Activated CD4-positive, alpha-beta T cell treated with anti-CD3 and anti-CD28 coated beads, Interleukin-2, amount 10 ng/mL, durations not matched to agents 24 days and 14 days (primary cell): ENCODE measurements at regions of chr16 and their contacts with region 1.

Region 1: DNA sequence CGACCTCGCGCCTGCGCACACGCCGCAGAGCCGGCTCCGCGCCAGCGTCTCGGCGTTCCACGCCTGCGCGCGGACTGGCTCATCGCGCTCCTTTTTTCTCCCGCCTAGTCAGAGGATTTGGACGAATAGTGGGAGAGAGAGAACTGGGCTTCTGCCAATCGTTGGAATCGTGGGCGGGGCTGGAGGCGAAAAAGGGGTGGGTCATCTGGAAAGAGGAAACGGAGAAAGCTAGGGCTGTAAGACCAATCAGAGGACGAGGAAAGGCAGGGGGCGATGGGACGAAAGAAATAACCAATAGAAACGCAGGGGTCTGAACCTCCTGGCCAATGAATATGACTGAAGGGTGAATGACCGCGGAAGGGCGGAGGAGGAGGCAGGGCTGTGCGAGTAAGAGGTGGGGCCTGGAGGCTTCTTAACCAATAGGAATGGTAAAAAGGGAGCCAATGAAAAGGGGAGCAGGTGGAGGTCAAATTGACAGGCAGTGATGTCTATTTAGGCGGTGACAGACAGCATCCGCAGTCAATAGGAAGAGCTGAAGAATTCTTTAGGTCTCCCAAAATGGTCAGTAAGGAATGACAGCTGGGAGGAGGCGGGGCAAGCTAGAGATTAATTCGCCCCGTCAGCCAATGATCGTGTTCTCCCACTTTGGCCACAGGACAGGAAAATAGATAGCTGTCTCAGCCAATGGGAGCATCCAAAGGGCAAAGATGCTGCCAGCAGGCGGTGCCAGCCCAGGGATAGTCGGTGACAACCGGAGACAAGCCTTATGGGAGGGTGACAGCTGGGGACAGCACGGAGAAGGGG is at the start of gene TBC1D10B:
- DNase-seq: peak; percentile 100
- H3K4me3 Mint-ChIP-seq: peak within 1 kb of the TSS; percentile 90
- H3K27ac Mint-ChIP-seq: peak within 1 kb of the TSS; percentile 94
- H3K4me1 Mint-ChIP-seq: peaks cover 42% of the 10 kb centered on the region
- H3K27me3 Mint-ChIP-seq: peaks cover 4% of the 10 kb centered on the region
- total RNA-seq, gene TBC1D10B: 68.9 TPM in 2 replicates

Region 2: DNA sequence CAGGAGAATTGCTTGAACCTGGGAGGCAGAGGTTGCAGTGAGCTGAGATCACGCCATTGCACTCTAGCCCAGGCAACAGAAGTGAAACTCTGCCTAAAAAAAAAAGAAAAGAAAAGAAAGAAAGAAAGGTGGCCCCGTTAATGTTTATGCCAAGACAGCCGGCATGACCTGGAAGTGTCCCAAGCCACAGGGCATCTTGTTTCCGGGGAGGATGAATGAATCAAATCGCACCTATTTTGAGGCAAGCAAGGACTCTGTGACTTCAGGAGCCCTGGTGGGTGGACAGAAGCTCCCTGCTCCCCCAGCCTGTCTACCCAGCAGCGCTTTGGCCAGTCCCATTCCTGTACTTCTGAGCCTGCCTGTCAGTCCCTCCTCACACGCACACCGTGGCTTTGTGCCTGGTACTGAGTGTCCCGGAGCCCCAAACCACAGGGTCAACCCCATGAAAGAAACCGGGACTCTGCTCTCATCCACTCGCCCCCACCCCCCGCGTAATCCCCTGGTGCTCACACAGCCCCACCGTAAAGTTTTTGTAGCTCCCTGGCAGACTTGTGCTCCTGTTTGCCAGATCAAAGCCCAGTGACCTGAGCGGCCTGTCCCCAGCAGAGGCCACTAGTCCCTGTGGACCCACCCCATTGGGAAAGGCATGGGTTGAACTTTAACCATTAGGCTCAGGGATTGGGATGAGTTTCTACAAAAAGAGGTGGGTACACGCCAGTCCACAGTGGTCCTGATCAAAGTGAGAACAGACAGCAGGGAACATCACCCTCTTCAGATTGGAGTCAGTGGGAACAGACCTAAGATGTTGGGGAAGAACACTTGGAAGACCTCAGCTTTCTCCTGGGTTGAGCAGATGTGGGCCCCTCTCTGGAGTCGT is 34.8 kb before region 1 on chr16:
- intact Hi-C with region 1: loop called (anchors 1 kb)
- DNase-seq: no peak
- H3K4me3 Mint-ChIP-seq: peak overlapping the region; percentile 86
- H3K27ac Mint-ChIP-seq: peak overlapping the region; percentile 83
- H3K4me1 Mint-ChIP-seq: peaks cover 13% of the 10 kb centered on the region
- H3K27me3 Mint-ChIP-seq: no peaks in the 10 kb centered on the region

Region 3: DNA sequence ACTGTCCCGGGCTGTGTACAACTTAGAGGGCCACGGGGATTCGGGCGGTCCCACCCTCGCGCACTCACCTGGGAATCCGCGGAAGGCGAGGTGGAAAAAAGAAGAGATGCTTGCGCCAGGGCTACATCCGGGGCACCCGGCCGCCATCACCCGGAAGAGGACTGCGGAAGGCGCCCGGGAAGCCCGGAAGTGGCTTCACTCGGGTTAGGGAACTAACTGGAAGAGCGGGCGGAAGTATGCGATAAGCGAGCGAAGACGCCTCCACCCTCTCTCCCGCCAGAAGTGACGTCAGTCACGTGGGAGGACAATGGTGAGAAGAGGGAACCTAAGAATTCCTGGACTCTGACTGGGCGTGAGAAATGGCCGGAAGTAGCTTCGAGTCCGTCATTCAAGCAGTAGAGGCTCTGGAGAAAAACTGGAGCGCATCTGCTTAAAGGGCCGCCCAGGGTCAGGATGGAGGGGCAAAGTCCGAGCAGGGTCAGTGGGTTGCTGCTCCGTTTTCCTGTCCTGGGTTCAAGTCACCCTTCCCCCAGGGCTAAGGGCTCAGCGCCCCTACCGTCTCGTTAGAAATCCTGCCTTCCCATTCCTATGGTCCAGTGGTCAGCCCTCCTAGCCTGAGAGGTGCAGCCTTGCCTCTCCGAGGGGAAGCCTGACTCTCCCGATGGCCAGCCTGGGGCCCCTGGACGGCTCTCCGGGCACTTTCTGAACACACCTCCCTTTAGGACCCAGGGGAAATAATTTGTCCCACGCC is 15.3 kb before region 1 on chr16 and contains the start of gene CD2BP2:
- intact Hi-C with region 1: loop called (anchors 1 kb)
- DNase-seq: peak; percentile 97
- H3K4me3 Mint-ChIP-seq: peak within 1 kb of the TSS; percentile 90
- H3K27ac Mint-ChIP-seq: peak within 1 kb of the TSS; percentile 89
- H3K4me1 Mint-ChIP-seq: peaks cover 37% of the 10 kb centered on the region
- H3K27me3 Mint-ChIP-seq: no peaks in the 10 kb centered on the region
- total RNA-seq, gene CD2BP2: 80.5 and 93.2 TPM in 2 replicates

Region 4: DNA sequence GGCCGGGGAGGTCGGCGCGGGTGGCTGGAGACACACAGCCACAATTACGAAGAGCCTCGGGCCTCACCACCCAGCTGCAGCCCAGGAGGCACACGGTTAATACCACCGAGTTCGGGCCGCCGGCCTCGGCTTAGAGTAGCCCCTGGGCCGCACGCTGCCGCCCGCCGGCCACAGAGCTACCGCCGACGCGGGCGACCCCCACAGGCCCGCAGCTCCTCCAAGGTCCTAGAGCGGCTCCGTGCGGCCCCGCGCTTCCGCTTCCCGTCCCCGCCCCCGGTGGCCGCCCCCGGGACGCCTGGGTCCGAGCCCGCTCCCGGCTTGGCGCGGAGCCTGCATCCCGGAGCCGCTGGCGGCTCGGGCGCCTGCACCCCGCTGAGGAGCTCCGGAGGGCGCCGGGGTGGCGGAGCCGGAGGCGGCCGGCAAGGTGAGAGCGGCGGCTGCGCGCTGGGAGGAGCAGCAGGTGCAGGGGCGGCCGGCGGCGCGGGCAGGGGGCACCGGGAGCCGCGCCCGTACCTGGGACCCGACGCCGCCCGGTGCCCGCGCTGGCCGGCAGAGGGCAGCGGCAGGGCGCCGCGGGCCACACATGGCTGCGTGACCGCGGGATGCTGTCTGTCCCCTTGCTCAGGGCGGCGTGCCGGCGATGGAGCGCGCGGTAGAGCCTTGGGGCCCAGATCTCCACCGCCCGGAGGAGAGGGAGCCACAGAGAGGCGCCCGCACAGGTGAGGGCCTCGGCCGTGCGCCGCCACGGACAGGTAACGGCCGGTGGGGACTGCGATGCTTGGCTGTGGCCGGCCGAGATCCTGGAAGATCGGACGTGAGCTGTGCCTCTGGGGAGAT is 24.7 kb after region 1 on chr16 and contains the start of gene ZNF48:
- intact Hi-C with region 1: loop called (anchors 1 kb)
- DNase-seq: peak; percentile 90
- H3K4me3 Mint-ChIP-seq: peak within 1 kb of the TSS; percentile 96
- H3K27ac Mint-ChIP-seq: peak within 1 kb of the TSS; percentile 86
- H3K4me1 Mint-ChIP-seq: peaks cover 32% of the 10 kb centered on the region
- H3K27me3 Mint-ChIP-seq: no peaks in the 10 kb centered on the region
- total RNA-seq, gene ZNF48: 16.5 and 18.3 TPM in 2 replicates

Region 5: DNA sequence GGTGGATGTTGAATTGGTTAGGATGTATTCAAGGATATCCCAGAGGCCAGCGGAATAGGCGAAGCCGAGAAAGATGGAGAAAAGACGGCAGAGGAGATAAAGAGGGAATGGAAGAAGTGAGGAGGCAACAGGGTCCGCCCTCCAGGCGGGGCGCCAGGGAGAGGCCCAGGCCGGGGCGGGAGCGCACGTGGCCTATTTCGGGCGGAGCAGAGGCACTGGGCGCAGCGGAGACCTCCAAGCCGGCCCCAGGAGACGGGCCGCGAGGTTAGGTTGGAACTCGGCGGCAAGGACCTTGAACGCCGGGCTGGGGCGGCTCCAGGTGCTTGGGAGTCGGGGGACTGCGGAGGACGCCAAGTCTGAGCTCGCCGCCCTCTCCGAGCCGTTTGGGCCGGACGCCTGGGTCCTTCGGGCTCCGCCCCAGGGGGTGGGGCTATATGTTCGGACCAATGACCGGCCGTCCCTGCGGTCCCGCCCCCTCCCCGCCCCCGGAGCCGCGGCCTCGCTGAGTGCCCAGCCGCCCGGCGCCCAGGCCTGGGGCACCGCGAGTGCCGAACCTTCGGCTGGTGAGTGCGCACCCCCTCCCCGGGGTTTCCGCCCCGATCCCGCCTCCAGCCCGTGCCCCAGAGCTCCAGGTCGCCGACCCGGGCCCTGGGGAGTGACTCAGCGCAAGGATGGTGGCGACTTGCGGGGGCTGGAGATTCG is 36.6 kb after region 1 on chr16 and contains the start of gene ZNF771:
- intact Hi-C with region 1: loop called (anchors 1 kb)
- DNase-seq: peak; percentile 97
- H3K4me3 Mint-ChIP-seq: peak within 1 kb of the TSS; percentile 94
- H3K27ac Mint-ChIP-seq: peak within 1 kb of the TSS; percentile 99
- H3K4me1 Mint-ChIP-seq: peaks cover 29% of the 10 kb centered on the region
- H3K27me3 Mint-ChIP-seq: peaks cover 6% of the 10 kb centered on the region
- total RNA-seq, gene ZNF771: 8.6 and 10.3 TPM in 2 replicates

Region 6: GRCh38 chr16:30526823-30527635 is 156.4 kb after region 1 on chr16:
- intact Hi-C with region 1: loop called (anchors 5 kb)
- DNase-seq: peak; percentile 98
- H3K4me3 Mint-ChIP-seq: peak overlapping the region; percentile 81
- H3K27ac Mint-ChIP-seq: peak overlapping the region; percentile 81
- H3K4me1 Mint-ChIP-seq: peaks cover 26% of the 10 kb centered on the region
- H3K27me3 Mint-ChIP-seq: no peaks in the 10 kb centered on the region

Region 7: DNA sequence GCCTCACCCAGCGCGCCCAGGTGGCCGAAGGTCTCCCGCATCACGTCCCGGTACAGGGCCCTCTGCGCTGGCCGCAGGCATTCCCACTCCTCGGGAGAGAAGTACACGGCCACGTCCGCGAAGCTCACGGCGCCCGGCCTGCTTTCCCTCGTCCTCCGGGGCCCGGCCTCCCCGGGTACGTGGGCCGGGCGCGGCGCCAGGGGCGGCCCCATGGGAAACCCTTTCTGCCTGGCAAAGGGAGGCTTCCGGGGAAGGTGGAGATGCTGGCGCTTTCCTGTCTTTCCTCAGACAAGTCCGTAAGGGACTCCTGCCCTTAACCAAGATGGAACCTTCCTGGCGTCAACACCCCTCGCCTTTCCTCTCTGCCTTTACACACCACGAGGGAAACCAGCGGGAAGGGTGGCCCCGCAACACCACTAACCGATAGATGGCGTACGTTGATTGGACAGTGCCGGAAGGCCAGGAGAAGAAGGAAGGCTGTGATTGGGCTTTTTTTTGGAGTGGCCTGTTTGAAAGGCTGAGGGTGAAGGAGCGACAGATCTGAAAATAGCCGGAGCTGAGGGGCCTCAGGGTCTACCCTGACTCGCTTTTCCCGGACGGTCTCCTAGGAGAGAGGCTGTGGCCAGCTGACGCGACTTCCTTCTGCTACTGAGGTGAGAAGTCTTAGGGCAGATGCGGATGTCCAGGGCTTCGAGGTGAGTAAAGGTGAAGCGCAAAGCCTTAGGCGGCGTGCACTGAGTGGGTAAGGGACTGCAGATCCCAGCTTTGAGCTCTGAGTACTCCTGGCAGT is 214.9 kb after region 1 on chr16 and contains the start of gene ZNF785:
- intact Hi-C with region 1: no loop called
- DNase-seq: peak; percentile 98
- H3K4me3 Mint-ChIP-seq: peak within 1 kb of the TSS; percentile 90
- H3K27ac Mint-ChIP-seq: peak within 1 kb of the TSS; percentile 91
- H3K4me1 Mint-ChIP-seq: peaks cover 25% of the 10 kb centered on the region
- H3K27me3 Mint-ChIP-seq: no peaks in the 10 kb centered on the region
- total RNA-seq, gene ZNF785: 17.1 and 17.8 TPM in 2 replicates